Activated CD4-positive, alpha-beta T cell treated with anti-CD3 and anti-CD28 coated beads, Interleukin-2, amount 10 ng/mL, durations not matched to agents 24 days and 14 days (primary cell): ENCODE measurements at regions of chr22 and their contacts with region 1.

Region 1: DNA sequence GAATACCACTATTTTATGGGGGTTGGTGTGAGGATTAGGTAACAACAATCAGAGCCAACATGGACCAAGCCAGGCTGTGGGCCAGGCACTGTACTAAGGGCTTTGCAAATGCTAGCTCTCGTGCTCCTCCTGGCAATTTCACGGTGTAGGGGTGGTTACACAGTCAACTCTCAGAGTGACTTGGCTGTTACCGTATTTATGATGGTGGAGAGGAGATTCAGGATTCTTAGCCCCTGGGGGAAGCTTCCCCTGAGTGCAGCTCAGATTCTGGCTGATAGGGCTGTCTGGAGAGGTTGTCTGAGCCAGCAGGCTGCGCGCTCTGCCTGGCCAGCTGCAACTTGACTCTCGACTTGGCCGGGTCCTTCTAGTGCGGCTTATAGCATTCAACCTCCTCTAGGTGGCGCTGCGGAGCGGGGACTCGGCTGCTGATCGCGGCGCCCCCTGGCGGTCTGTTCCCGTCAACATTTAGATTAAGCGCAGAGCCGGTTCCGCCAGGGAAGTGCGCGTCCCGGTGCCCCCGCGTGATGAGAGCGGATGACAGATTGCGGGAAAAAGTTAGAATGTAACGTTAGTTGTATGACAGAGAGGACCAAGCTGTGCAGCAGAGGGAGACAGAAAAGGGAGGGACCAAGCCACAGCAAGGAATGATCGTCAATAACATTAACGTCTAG is 4.5 kb upstream of the NCF4 start:
- DNase-seq: peak; percentile 99
- H3K4me3 Mint-ChIP-seq: peak overlapping the region; percentile 70
- H3K27ac Mint-ChIP-seq: peak overlapping the region; percentile 57
- H3K4me1 Mint-ChIP-seq: peaks cover 42% of the 10 kb centered on the region
- H3K27me3 Mint-ChIP-seq: no peaks in the 10 kb centered on the region

Region 2: GRCh38 chr22:36613958-36614357 is 242.3 kb before region 1 on chr22:
- intact Hi-C with region 1: no loop called
- DNase-seq: no peak
- H3K4me3 Mint-ChIP-seq: no peak overlapping the region
- H3K27ac Mint-ChIP-seq: no peak overlapping the region
- H3K4me1 Mint-ChIP-seq: no peaks in the 10 kb centered on the region
- H3K27me3 Mint-ChIP-seq: peaks cover 19% of the 10 kb centered on the region

Region 3: DNA sequence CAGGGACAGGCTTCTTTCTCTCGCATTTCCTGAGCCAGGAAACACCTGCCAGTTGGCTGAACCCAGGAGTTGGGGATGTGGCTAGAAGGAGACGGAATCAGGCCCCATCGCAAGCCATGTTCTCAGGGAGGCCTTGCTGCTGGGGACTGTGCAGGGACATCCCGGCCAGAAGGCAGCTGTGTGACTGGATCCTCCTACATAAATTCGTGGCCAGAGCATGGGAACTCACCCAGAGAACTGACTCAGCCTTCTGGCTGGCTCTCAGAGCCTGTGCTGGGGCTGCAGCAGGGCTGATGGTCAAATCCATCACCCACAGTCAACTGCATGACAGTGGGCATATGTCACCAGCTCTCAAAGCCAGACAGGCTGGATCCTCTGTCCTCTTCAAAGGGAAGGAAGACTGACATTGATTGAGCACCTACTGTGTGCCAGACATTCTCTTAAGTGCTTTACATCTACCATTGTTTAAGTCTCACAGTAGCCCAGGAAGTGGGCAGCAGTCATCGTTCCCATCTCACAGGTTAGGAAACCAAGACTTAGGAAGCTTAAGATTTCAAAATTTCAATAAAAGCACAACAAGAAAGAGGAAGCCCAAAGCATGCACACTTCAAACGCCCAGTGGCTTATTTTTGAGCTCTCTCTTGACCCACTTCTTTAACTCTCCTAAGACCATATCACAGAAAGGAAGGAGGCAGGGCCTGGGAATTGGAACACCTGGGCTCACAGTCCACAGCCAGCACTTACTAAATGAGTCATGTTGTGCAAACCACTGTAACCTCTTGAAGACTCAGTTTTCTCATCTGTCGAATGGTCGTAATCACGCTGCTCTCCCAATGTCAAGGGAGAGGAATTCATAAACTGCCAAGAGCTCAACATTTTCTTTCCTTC is 121.8 kb before region 1 on chr22:
- intact Hi-C with region 1: no loop called
- DNase-seq: no peak
- H3K4me3 Mint-ChIP-seq: no peak overlapping the region
- H3K27ac Mint-ChIP-seq: no peak overlapping the region
- H3K4me1 Mint-ChIP-seq: peaks cover 2% of the 10 kb centered on the region
- H3K27me3 Mint-ChIP-seq: peaks cover 21% of the 10 kb centered on the region

Region 4: GRCh38 chr22:36781656-36782627 is 74.3 kb before region 1 on chr22:
- intact Hi-C with region 1: loop called (anchors 1 kb)
- DNase-seq: peak; percentile 97
- H3K4me3 Mint-ChIP-seq: peak overlapping the region; percentile 63
- H3K27ac Mint-ChIP-seq: peak overlapping the region; percentile 95
- H3K4me1 Mint-ChIP-seq: peaks cover 27% of the 10 kb centered on the region
- H3K27me3 Mint-ChIP-seq: peaks cover 1% of the 10 kb centered on the region

Region 5: DNA sequence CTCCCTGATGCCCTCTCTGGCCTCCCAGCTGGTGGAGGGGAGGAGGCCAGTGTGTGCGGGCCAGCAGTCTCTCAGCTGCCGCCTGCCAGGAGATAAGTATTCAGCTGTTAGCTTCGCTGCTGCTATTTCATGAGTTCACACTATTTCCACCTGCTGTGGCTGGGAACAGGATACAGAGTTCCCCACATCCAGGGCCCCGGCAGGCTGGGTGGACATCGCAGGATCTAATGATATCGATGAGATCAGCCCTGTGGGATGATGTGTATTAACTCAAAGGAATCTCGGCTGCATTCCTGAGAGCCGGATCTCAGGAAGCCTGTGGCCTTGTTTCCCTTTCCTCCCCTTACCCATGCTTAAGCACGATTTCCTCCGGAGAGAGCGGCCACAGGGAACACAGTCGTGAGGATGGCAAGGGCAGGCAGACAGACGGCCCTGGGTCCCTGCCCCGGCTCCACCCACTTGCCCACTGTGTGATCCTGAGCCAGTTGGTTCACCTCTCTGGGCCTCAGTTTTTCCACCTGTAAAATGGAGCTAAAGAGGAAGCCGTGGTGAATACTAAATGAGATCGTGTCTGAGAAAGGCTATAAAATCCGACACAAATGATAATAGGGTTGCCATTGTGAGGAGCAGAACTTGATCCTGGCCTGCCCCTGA is 32.9 kb before region 1 on chr22:
- intact Hi-C with region 1: no loop called
- DNase-seq: no peak
- H3K4me3 Mint-ChIP-seq: no peak overlapping the region
- H3K27ac Mint-ChIP-seq: no peak overlapping the region
- H3K4me1 Mint-ChIP-seq: no peaks in the 10 kb centered on the region
- H3K27me3 Mint-ChIP-seq: peaks cover 29% of the 10 kb centered on the region

Region 6: GRCh38 chr22:36873680-36874537 is 17.7 kb after region 1 on chr22:
- intact Hi-C with region 1: loop called (anchors 1 kb)
- DNase-seq: peak; percentile 81
- H3K4me3 Mint-ChIP-seq: peak overlapping the region; percentile 62
- H3K27ac Mint-ChIP-seq: peak overlapping the region; percentile 93
- H3K4me1 Mint-ChIP-seq: peaks cover 22% of the 10 kb centered on the region
- H3K27me3 Mint-ChIP-seq: no peaks in the 10 kb centered on the region

Region 7: DNA sequence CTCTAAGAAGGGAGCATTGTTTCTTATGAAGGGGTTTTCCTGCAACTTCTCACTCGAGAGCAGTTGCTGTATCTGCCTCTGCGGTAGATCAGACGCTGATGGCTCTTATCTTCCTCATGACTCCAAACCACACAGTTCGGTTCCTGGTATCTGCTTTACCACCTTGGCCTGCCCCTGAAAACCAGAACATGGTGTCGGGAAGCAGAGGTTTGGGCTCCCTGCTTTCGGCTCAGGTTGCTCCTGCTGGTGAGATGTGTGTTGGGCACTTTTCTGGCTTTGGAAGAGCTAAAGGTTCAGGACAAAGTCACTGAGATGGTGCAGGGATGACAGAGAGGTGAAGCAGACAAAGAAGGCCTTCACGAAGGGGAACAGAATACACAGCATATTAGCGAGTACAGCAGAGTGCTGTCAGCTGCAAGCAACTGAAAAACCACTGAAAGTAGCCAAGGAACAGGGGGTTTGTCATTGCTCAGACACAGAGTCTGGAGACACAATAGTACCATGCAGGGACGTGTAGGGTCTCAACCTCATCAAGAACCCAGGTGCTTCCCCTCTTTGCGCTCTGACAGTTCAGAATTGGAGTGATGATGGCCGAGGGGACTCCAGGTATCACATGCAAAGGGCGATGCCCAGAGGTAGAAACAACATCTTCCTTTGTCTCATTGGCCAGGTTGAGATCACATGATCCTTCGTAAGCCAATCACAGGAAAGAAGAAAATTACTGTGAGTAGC is 45.3 kb after region 1 on chr22:
- intact Hi-C with region 1: no loop called
- DNase-seq: peak; percentile 80
- H3K4me3 Mint-ChIP-seq: peak overlapping the region; percentile 69
- H3K27ac Mint-ChIP-seq: peak overlapping the region; percentile 87
- H3K4me1 Mint-ChIP-seq: peaks cover 19% of the 10 kb centered on the region
- H3K27me3 Mint-ChIP-seq: peaks cover 12% of the 10 kb centered on the region